A549 (cell line): ENCODE measurements at regions of chr5 and their contacts with region 1.

Region 1: GRCh38 chr5:145825751-145826180 is 9.4 kb downstream of the PRELID2 start:
- DNase-seq: peak; percentile 28 to 63
- ATAC-seq: peak; percentile 71 to 87; a peak in 5 of 6 replicates
- H3K4me3 ChIP-seq: no peak overlapping the region
- H3K27ac ChIP-seq: no peak overlapping the region
- H3K4me1 ChIP-seq: peaks cover 17% of the 10 kb centered on the region
- CTCF ChIP-seq: peak; percentile 96
- EP300 ChIP-seq: no peak
- POLR2A ChIP-seq: no peak
- RAD21 ChIP-seq: peak; percentile 83 to 88

Region 2: DNA sequence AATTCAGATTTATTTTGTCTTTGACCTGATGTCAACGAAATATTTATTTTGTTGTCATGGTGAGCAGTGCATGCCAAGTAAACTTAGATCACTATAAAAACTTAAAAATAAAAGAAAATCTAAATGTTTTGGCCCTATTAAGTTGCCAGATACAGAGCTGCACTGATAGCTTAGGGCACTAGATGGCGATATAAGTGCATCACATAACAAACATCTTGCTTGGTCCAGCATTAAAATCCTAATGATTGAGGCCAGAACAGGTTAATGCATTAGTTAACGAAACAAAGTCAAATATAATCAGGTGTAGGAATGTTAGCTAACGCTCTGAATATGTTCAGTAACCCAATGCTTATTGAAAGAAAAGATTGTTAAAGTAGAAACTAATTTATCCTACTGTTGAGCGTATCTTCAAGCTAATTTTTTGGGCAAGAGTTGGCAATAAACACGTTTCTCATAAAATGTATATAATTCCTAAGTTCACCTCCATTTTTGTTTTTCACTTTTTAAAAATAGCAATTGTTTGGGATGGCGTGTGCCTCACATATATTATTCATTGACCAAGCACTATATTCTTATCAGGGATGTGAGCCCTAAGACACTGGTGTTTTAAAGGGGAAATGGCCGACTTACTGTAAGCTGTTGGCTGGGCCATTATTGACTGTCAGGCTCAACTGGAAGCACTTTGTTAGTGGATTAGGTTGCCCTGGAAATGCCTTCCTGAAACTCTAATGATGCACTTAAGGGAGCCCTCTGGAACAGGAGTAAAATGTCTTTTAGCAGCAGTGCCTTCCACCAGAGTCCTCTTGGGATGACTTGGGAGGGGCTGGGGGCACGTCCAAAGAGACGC is 1621.8 kb before region 1 on chr5:
- CTCF ChIA-PET with region 1: interaction called, 17 read pairs
- POLR2A ChIA-PET with region 1: no interaction called
- DNase-seq: peak in 1 of 2 experiments; percentile 79
- ATAC-seq: peak; percentile 63 to 75; a peak in 4 of 6 replicates
- H3K4me3 ChIP-seq: no peak overlapping the region
- H3K27ac ChIP-seq: no peak overlapping the region
- H3K4me1 ChIP-seq: peaks cover 25% of the 10 kb centered on the region
- CTCF ChIP-seq: peak; percentile 91
- EP300 ChIP-seq: no peak
- POLR2A ChIP-seq: no peak
- RAD21 ChIP-seq: peak; percentile 91 to 93

Region 3: GRCh38 chr5:145681686-145682085 is 144.1 kb before region 1 on chr5:
- CTCF ChIA-PET with region 1: interaction called, 12 read pairs
- POLR2A ChIA-PET with region 1: no interaction called
- DNase-seq: peak; percentile 71 to 74
- ATAC-seq: peak; percentile 94 to 100
- H3K4me3 ChIP-seq: no peak overlapping the region
- H3K27ac ChIP-seq: peak overlapping the region in 1 of 2 experiments; percentile 13; a peak in 1 of 6 replicates
- H3K4me1 ChIP-seq: peaks cover 4% of the 10 kb centered on the region; the same call in 1 of the 3 replicates
- CTCF ChIP-seq: peak; percentile 82
- EP300 ChIP-seq: no peak
- POLR2A ChIP-seq: no peak
- RAD21 ChIP-seq: peak; percentile 76 to 78

Region 4: GRCh38 chr5:145697251-145697990 is 128.3 kb before region 1 on chr5:
- CTCF ChIA-PET with region 1: interaction called, 16 read pairs
- POLR2A ChIA-PET with region 1: no interaction called
- DNase-seq: peak; percentile 19 to 53
- ATAC-seq: peak; percentile 54 to 81; a peak in 5 of 6 replicates
- H3K4me3 ChIP-seq: no peak overlapping the region
- H3K27ac ChIP-seq: no peak overlapping the region
- H3K4me1 ChIP-seq: no peaks in the 10 kb centered on the region
- CTCF ChIP-seq: peak; percentile 49
- EP300 ChIP-seq: no peak
- POLR2A ChIP-seq: no peak
- RAD21 ChIP-seq: peak; percentile 55 to 67

Region 5: DNA sequence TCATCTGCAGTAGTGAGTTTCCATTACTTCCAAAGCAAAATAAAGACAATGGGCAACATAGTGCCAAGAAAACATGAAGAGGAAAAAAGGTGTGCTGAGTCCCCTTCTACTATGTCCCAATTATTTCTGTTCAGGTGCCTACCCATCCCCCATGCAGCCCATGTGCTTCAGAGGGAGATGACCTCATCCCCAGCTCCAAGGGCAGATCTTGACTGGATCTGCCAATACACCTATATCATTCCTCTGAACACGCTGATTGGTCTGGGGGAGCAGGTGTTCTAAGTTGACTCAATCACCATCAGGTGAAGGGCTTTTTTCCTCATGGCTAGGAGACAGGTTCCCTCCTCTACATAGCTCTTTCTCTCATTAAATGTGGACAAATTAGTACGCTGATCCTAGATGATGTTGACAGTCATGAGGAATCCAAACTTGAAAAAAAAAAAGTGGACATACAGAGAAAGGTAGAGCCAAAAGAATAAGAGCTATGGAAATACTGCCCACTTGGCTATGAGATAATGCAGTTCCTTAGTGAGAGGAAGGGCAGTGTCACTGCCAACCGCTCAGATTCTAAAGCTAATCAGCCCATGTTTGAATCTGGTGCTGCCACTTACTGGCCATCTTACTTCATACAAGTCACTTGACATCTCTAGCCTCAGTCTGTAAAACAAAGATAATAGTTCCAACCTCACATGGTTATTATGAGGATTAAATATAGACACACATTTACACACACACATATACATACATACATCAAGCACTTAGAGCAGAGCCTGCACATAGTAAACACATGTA is 13.7 kb before region 1 on chr5:
- CTCF ChIA-PET with region 1: interaction called, 25 read pairs
- POLR2A ChIA-PET with region 1: no interaction called
- DNase-seq: peak in 1 of 2 experiments; percentile 54
- ATAC-seq: peak; percentile 94 to 95
- H3K4me3 ChIP-seq: no peak overlapping the region
- H3K27ac ChIP-seq: no peak overlapping the region
- H3K4me1 ChIP-seq: peaks cover 6% of the 10 kb centered on the region
- CTCF ChIP-seq: peak; percentile 59
- EP300 ChIP-seq: no peak
- POLR2A ChIP-seq: no peak
- RAD21 ChIP-seq: peak; percentile 68 to 71

Region 6: GRCh38 chr5:145846081-145846480 is 20.3 kb after region 1 on chr5:
- CTCF ChIA-PET with region 1: interaction called, 26 read pairs
- POLR2A ChIA-PET with region 1: no interaction called
- DNase-seq: no peak
- ATAC-seq: no peak
- H3K4me3 ChIP-seq: no peak overlapping the region
- H3K27ac ChIP-seq: no peak overlapping the region
- H3K4me1 ChIP-seq: 0 out of 3 replicates have a peak, but pooled peaks cover 7% of the 10 kb centered on the region
- CTCF ChIP-seq: no peak
- EP300 ChIP-seq: no peak
- POLR2A ChIP-seq: no peak
- RAD21 ChIP-seq: no peak

Region 7: GRCh38 chr5:146049014-146049703 is 223.4 kb after region 1 on chr5:
- CTCF ChIA-PET with region 1: interaction called, 16 read pairs
- POLR2A ChIA-PET with region 1: no interaction called
- DNase-seq: peak; percentile 76 to 81
- ATAC-seq: peak; percentile 86 to 94
- H3K4me3 ChIP-seq: no peak overlapping the region
- H3K27ac ChIP-seq: peak overlapping the region in 1 of 2 experiments; percentile 52; a peak in 2 of 6 replicates
- H3K4me1 ChIP-seq: peaks cover 5% of the 10 kb centered on the region; the same call in 2 of the 3 replicates
- CTCF ChIP-seq: peak; percentile 91
- EP300 ChIP-seq: no peak
- POLR2A ChIP-seq: no peak
- RAD21 ChIP-seq: peak; percentile 96 to 97